CD8-positive, alpha-beta memory T cell (primary cell): ENCODE measurements at regions of chr7 and their contacts with region 1.

Region 1: GRCh38 chr7:96075510-96076349 is 246.2 kb downstream of the SLC25A13 start:
- DNase-seq: peak; percentile 10 to 53 (median 31)
- H3K4me3 ChIP-seq: peak overlapping the region; percentile 50
- H3K4me3 Mint-ChIP-seq: peak overlapping the region; percentile 66 to 90 (median 83)
- H3K27ac ChIP-seq: no peak overlapping the region
- H3K27ac Mint-ChIP-seq: no peak overlapping the region
- H3K4me1 ChIP-seq: peaks cover 7% of the 10 kb centered on the region
- H3K4me1 Mint-ChIP-seq: peaks cover 6 to 11% (median 7%) of the 10 kb centered on the region in 3 donors
- H3K27me3 ChIP-seq: peaks cover 9% of the 10 kb centered on the region
- H3K27me3 Mint-ChIP-seq: peaks cover 20 to 70% of the 10 kb centered on the region in 2 donors

Region 2: GRCh38 chr7:97027427-97028234 is 951.9 kb after region 1 on chr7:
- CTCF ChIA-PET with region 1: interaction called, 18 read pairs
- POLR2A ChIA-PET with region 1: no interaction called
- DNase-seq: peak; percentile 37 to 69 (median 42)
- H3K4me3 ChIP-seq: peak overlapping the region; percentile 23
- H3K4me3 Mint-ChIP-seq: peak overlapping the region; percentile 63 to 90 (median 83)
- H3K27ac ChIP-seq: no peak overlapping the region
- H3K27ac Mint-ChIP-seq: no peak overlapping the region
- H3K4me1 ChIP-seq: peaks cover 22% of the 10 kb centered on the region
- H3K4me1 Mint-ChIP-seq: peaks cover 33 to 44% (median 39%) of the 10 kb centered on the region in 3 donors
- H3K27me3 ChIP-seq: peaks cover 54% of the 10 kb centered on the region
- H3K27me3 Mint-ChIP-seq: peaks cover 49 to 85% of the 10 kb centered on the region in 2 donors